Panc1 (cell line): ENCODE measurements at regions of chr1 and their contacts with region 1.

Region 1: DNA sequence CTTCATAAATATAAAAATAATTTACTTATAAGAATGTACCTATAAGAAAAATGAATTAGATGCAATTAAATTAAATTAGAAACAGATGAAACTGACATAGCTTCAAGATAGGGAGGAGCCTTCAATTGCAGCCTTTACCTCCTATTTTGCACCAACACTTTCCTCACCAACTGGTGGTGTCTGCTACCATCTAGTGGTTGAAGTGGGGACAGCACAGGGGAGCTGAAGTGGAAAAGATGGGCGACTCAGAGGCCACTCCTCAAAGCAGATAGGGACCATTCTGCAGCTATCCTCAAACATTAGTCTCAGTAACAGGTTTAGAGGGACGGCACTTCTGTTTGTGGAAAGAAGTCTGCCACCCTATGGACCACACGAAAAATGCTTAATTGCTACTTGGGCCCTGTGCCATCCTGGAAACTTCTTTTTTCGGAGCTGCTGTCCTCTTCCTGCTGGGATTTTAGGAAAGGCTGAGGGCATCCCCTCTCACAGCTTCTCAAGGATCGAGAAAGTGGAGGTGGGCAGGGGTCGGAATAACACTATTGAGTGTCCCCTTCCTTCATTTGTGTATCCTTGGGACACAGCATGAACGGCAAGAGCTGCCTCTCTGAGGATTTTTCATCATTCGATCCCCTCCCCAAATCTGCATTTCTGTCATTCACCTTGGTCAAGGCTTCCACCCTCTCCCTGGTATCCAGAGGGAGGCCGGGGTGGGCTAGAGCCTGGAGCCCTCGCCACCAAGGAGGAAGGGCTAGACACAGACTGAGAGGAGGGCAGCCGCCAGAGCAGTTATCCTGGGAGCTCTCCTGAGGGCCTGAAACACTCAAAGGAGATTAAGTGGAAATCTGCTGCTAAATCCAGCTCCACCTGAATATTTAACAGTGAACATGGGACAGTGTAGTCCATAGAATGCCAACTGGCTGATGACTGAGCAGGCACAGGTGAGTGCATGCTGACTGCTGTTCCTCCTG is 9.6 kb downstream of the PROK1 start:
- DNase-seq: peak; percentile 75
- ATAC-seq: peak; percentile 89
- H3K4me3 ChIP-seq: no peak overlapping the region
- H3K27ac ChIP-seq: no peak overlapping the region
- H3K4me1 ChIP-seq: no peaks in the 10 kb centered on the region; the same call in 1 of the 2 replicates
- H3K27me3 ChIP-seq: no peaks in the 10 kb centered on the region
- CTCF ChIP-seq: peak; percentile 85

Region 2: GRCh38 chr1:110209715-110210603 is 250.6 kb before region 1 on chr1 and contains the start of gene KCNC4:
- CTCF ChIA-PET with region 1: interaction called, 10 read pairs
- POLR2A ChIA-PET with region 1: no interaction called
- in situ Hi-C with region 1: no loop called
- intact Hi-C with region 1: loop called (anchors 2 kb)
- DNase-seq: no peak
- ATAC-seq: peak; percentile 93
- H3K4me3 ChIP-seq: peak within 1 kb of the TSS; percentile 53 to 58
- H3K27ac ChIP-seq: peak within 1 kb of the TSS; percentile 83
- H3K4me1 ChIP-seq: peaks cover 19% of the 10 kb centered on the region
- H3K27me3 ChIP-seq: no peaks in the 10 kb centered on the region
- CTCF ChIP-seq: no peak
- total RNA-seq, gene KCNC4: 15.4 TPM

Region 3: GRCh38 chr1:110312188-110313121 is 148.1 kb before region 1 on chr1:
- CTCF ChIA-PET with region 1: no interaction called
- POLR2A ChIA-PET with region 1: no interaction called
- in situ Hi-C with region 1: no loop called
- intact Hi-C with region 1: loop called (anchors 10 kb)
- DNase-seq: peak; percentile 51
- ATAC-seq: peak; percentile 97
- H3K4me3 ChIP-seq: no peak overlapping the region
- H3K27ac ChIP-seq: peak overlapping the region; percentile 48; the same call in 1 of the 2 replicates
- H3K4me1 ChIP-seq: no peaks in the 10 kb centered on the region
- H3K27me3 ChIP-seq: no peaks in the 10 kb centered on the region
- CTCF ChIP-seq: peak; percentile 83

Region 4: DNA sequence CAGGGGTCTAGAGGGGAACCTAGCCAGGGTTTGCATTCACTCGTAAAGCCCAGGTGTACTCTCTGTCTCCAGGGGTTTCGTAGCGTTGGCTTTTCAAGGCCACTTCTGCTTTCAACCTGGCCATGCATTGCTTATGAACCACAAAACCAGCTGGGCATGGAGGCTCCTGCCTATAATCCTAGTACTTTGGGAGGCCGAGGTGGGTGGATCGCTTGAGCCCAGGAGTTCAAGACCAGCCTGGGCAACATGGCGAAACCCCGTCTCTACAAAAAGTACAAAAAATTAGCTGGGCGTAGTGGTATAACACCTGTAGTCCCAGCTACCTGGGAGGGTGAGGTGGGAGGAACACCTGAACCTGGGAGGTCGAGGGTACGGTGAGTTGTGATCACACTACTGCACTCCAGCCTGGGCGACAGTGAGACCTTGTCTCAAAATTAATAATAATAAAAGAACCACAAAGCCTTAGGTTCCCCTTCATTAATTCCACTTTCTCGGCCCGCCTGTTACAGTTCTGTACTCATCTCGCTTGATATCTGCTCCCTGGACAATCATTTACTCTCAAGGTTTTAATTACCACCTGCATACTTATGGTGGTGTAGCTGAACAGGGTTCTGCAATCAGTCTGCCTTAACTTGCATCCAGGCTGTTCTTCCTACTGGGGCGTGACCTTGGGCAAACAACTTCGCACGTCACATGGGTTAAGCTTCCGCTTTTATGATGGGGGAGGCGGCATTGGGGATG is 75.8 kb before region 1 on chr1:
- CTCF ChIA-PET with region 1: no interaction called
- POLR2A ChIA-PET with region 1: interaction called, 17 read pairs
- in situ Hi-C with region 1: no loop called
- intact Hi-C with region 1: no loop called
- DNase-seq: no peak
- ATAC-seq: no peak
- H3K4me3 ChIP-seq: no peak overlapping the region
- H3K27ac ChIP-seq: no peak overlapping the region
- H3K4me1 ChIP-seq: no peaks in the 10 kb centered on the region
- H3K27me3 ChIP-seq: no peaks in the 10 kb centered on the region
- CTCF ChIP-seq: no peak

Region 5: GRCh38 chr1:110412576-110412975 is 48.0 kb before region 1 on chr1:
- CTCF ChIA-PET with region 1: interaction called, 16 read pairs
- POLR2A ChIA-PET with region 1: no interaction called
- in situ Hi-C with region 1: no loop called
- intact Hi-C with region 1: loop called (anchors 2 kb)
- DNase-seq: peak; percentile 28
- ATAC-seq: peak; percentile 78
- H3K4me3 ChIP-seq: no peak overlapping the region
- H3K27ac ChIP-seq: no peak overlapping the region
- H3K4me1 ChIP-seq: no peaks in the 10 kb centered on the region
- H3K27me3 ChIP-seq: no peaks in the 10 kb centered on the region
- CTCF ChIP-seq: peak; percentile 76

Region 6: DNA sequence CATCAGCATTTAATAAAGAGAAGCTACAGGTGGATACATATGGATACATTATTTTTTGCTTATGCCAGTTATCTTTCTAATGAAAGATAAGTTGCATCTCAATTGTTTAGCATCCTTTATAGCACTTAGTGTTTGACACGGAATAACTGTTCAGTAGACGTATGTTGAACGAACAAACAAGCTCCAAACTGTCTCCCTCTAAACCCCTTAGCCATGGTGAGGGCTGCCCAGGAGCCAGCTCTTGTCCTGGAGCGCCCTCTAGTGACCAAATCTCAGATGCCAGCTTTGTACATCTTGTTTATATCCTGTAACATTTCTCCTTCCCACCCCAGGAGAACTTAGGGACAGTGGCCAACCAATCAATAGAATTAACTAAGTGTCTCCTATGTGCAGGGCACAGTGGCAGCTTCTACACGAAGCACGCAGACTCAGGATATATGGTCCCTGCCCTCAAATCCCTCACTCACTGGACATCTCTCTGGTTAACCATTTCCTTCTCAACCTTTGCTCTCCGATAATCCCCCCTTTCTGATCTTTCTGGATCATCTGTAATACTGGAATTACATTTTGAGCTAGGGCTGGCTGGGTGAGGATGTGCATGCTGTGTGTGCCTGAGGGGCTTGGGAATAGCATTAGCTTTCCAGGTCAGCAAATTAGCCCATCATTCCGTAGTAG is 35.5 kb after region 1 on chr1:
- CTCF ChIA-PET with region 1: interaction called, 14 read pairs
- POLR2A ChIA-PET with region 1: no interaction called
- in situ Hi-C with region 1: no loop called
- intact Hi-C with region 1: loop called (anchors 5 kb)
- DNase-seq: peak; percentile 43
- ATAC-seq: peak; percentile 89
- H3K4me3 ChIP-seq: no peak overlapping the region
- H3K27ac ChIP-seq: no peak overlapping the region
- H3K4me1 ChIP-seq: no peaks in the 10 kb centered on the region
- H3K27me3 ChIP-seq: no peaks in the 10 kb centered on the region
- CTCF ChIP-seq: peak; percentile 92

Region 7: GRCh38 chr1:110548381-110548780 is 87.8 kb after region 1 on chr1:
- CTCF ChIA-PET with region 1: no interaction called
- POLR2A ChIA-PET with region 1: no interaction called
- in situ Hi-C with region 1: no loop called
- intact Hi-C with region 1: no loop called
- DNase-seq: peak; percentile 13
- ATAC-seq: peak; percentile 79; the same call in 1 of the 2 replicates
- H3K4me3 ChIP-seq: no peak overlapping the region
- H3K27ac ChIP-seq: no peak overlapping the region
- H3K4me1 ChIP-seq: no peaks in the 10 kb centered on the region
- H3K27me3 ChIP-seq: peaks cover 2% of the 10 kb centered on the region; the same call in 1 of the 2 replicates
- CTCF ChIP-seq: peak; percentile 76